GM12878 (cell line): ENCODE measurements at regions of chr9 and their contacts with region 1.

Region 1: GRCh38 chr9:116939614-116940013 is 252.5 kb downstream of the TRIM32 start:
- DNase-seq: no peak
- ATAC-seq: peak; percentile 85
- H3K4me3 ChIP-seq: no peak overlapping the region
- H3K27ac ChIP-seq: no peak overlapping the region
- H3K4me1 ChIP-seq: peaks cover 20% of the 10 kb centered on the region
- H3K27me3 ChIP-seq: no peaks in the 10 kb centered on the region
- CTCF ChIP-seq: no peak
- EP300 ChIP-seq: peak; percentile 53 to 74; a peak in 2 of 4 replicates
- POLR2A ChIP-seq: no peak
- RAD21 ChIP-seq: no peak

Region 2: DNA sequence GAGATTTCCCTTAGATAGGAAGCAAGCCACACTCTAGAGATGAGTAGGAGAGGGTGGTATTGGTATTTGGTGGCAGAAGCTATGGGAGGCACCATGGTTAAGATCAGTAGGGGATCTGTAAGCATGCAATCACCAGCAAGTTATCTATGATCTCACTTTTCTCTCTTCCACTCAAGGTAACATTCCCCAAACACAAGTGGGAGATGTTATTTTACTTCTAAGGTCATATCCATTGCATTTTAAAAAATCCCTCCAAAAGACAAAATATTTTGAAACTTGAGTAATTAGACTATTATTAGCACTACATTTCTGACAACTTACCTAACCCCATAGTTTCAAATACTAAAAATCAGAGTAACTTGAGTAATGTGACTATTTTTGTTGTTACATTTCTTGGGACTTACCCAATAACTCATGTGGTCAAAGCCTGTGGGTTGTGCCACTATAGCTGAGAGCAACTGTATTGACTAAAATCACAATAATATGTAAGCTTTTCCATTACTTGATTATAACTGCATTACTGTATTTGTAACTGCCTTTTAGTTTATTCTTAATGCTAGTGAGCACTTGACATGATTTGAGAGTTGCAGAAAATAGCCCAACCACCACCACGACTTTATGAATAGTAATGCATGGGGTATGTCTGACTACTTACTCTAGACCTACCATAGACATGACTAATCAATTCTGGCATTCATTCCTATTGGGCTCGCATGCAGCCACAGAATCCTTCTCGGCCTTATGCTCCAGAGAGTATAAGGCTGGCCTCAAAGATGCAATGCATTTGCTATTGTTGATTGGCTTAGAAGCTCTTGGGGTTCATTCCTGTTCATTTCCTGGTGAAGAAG is 12.2 kb after region 1 on chr9:
- CTCF ChIA-PET with region 1: interaction called, 5 read pairs
- POLR2A ChIA-PET with region 1: interaction called, 5 read pairs
- RAD21 ChIA-PET with region 1: interaction called, 6 read pairs
- SMC1A ChIA-PET with region 1: interaction called, 16 read pairs
- in situ Hi-C with region 1: no loop called
- intact Hi-C with region 1: no loop called
- DNase-seq: peak; percentile 85
- ATAC-seq: peak; percentile 87
- H3K4me3 ChIP-seq: no peak overlapping the region
- H3K27ac ChIP-seq: peak overlapping the region; percentile 70
- H3K4me1 ChIP-seq: peaks cover 20% of the 10 kb centered on the region
- H3K27me3 ChIP-seq: no peaks in the 10 kb centered on the region
- CTCF ChIP-seq: no peak
- EP300 ChIP-seq: peak; percentile 42 to 96; a peak in 3 of 4 replicates
- POLR2A ChIP-seq: no peak
- RAD21 ChIP-seq: no peak